Sigmoid colon (tissue), 7 donors: ENCODE measurements at regions of chr13 and their contacts with region 1.

Region 1: GRCh38 chr13:31161828-31162590 is at the start of gene HSPH1:
- DNase-seq: peak; percentile 99
- H3K4me3 ChIP-seq: peak within 1 kb of the TSS; percentile 66 to 92 (median 75)
- H3K27ac ChIP-seq: peak within 1 kb of the TSS; percentile 84 to 98 (median 90)
- H3K4me1 ChIP-seq: peaks cover 0 to 20% (median 18%) of the 10 kb centered on the region in 4 donors
- H3K27me3 ChIP-seq: no peaks in the 10 kb centered on the region
- CTCF ChIP-seq: peak in 1 of 4 experiments; percentile 10
- EP300 ChIP-seq: peak in 1 of 4 donors; percentile 80
- POLR2A ChIP-seq: peak; percentile 18 to 57
- total RNA-seq, gene HSPH1: 30.7 to 41.5 (median 33.7) TPM

Region 2: DNA sequence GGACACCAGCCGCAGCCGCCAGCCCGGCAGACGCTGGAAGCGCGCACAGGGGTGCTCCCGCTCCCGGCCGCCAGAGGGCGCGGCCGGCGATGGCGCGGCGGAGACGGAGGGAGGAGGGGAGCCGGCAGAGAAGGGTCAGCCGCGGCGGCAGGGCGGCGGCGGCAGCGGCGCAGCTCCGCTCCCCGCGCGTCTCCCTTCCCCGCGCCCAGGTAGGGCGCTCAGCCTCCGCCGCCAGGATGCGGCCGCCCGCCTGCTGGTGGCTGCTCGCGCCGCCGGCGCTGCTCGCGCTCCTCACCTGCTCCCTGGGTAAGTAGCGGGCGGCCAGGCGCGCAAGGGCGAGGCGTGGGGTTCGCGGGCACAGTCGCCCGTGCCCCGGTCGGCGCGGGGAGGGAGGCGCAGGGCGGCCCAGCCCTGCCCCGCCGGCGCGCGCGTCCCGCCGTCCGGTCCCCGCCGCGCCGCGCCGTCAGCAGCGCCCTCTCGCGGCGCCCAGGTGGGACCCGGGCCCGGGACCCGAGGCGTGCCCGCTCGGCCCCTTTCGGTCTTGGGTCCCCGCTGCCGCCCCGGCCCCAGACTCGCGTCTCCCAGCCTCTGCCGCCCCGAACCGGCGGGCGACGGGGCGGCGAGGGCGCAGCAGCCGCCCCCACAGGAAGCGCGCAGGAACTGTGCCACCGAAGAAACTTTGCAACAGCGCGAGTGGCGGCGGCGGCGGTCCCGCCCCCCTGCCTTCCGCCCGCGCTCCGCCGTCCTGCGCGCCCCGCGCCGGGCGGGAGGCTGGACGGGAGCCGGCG is 38.0 kb after region 1 on chr13 and contains the start of gene B3GLCT:
- intact Hi-C with region 1: loop called (anchors 1 kb)
- DNase-seq: peak; percentile 85
- H3K4me3 ChIP-seq: peak within 1 kb of the TSS; percentile 57 to 88 (median 80)
- H3K27ac ChIP-seq: peak within 1 kb of the TSS; percentile 91 to 99 (median 96)
- H3K4me1 ChIP-seq: peaks cover 0 to 16% (median 10%) of the 10 kb centered on the region in 4 donors
- H3K27me3 ChIP-seq: no peaks in the 10 kb centered on the region
- CTCF ChIP-seq: peak in 2 of 4 experiments; percentile 66 to 91
- EP300 ChIP-seq: no peak
- POLR2A ChIP-seq: no peak
- total RNA-seq, gene B3GLCT: 5.8 to 7.5 (median 6.8) TPM

Region 3: DNA sequence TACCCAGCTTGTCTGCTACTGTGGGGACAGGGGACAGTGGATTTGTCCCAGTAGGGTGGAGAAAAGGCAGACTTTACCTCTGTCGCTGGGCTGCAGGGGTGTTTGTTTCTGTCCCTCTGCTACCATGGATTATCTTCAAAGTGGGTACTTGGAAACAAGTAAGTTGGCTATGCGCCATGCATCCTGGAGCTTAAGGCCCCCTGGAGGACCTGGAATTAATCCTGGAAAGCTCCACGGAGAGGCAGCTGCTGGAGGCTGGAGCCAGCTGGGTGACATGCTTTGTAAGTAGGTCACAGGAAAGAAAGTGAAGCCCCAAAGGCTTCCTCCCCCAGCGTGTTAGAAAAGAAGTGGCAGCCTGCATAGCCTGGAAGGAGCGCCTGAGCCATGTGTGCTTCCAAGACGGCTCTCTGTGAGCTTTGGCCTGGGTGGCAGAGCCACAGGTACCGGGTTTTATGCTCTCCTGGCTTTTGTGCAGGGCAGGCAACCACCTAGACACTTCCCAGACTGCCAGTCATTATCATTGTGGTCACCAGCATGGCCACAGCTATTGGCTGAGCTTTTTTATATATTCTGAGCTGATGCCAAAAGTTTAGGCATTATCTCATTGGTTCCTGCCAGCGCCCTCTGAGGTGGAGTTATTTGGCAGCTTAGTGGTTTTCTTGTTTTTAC is 47.3 kb after region 1 on chr13:
- intact Hi-C with region 1: loop called (anchors 2 kb)
- DNase-seq: peak; percentile 81
- H3K4me3 ChIP-seq: no peak overlapping the region
- H3K27ac ChIP-seq: peak overlapping the region; percentile 24 to 67 (median 55)
- H3K4me1 ChIP-seq: peaks cover 0 to 40% (median 33%) of the 10 kb centered on the region in 4 donors
- H3K27me3 ChIP-seq: no peaks in the 10 kb centered on the region
- CTCF ChIP-seq: no peak
- EP300 ChIP-seq: no peak
- POLR2A ChIP-seq: no peak

Region 4: DNA sequence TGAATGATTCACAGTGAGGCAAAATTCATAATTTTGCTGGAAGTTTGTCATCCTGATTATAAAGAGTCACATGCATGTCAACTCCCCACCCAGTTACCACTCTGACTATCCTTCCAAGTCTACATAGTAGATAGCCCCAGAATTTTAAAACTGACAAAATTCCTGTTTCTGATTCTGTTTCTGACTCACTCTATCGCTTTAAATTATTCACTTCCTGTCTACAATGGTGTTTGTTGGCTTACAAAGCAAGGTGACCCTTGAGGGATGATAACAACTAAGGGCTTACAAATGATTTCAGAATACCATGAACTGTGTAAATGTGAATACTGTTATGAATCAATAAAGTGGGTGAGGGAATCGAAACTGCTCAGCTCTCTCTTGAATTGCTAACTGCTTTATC is 1755.5 kb after region 1 on chr13:
- intact Hi-C with region 1: no loop called
- DNase-seq: no peak
- H3K4me3 ChIP-seq: no peak overlapping the region
- H3K27ac ChIP-seq: no peak overlapping the region
- H3K4me1 ChIP-seq: no peaks in the 10 kb centered on the region
- H3K27me3 ChIP-seq: no peaks in the 10 kb centered on the region
- CTCF ChIP-seq: no peak
- EP300 ChIP-seq: no peak
- POLR2A ChIP-seq: no peak